Activated CD4-positive, alpha-beta memory T cell treated with anti-CD3 and anti-CD28 coated beads for 36 hours (primary cell): ENCODE measurements at regions of chr1 and their contacts with region 1.

Region 1: GRCh38 chr1:113140588-113141446 is 67.8 kb downstream of the LRIG2 start:
- DNase-seq: peak; percentile 67
- H3K4me3 Mint-ChIP-seq: no peak overlapping the region
- H3K27ac Mint-ChIP-seq: no peak overlapping the region
- H3K4me1 Mint-ChIP-seq: peaks cover 15% of the 10 kb centered on the region
- H3K27me3 Mint-ChIP-seq: no peaks in the 10 kb centered on the region

Region 2: GRCh38 chr1:112466078-112466660 is 674.6 kb before region 1 on chr1:
- CTCF ChIA-PET with region 1: no interaction called
- POLR2A ChIA-PET with region 1: no interaction called
- intact Hi-C with region 1: no loop called
- DNase-seq: peak; percentile 91
- H3K4me3 Mint-ChIP-seq: peak overlapping the region; percentile 74
- H3K27ac Mint-ChIP-seq: no peak overlapping the region
- H3K4me1 Mint-ChIP-seq: peaks cover 8% of the 10 kb centered on the region
- H3K27me3 Mint-ChIP-seq: peaks cover 15% of the 10 kb centered on the region

Region 3: GRCh38 chr1:113452921-113453770 is 312.3 kb after region 1 on chr1:
- CTCF ChIA-PET with region 1: interaction called, 25 read pairs
- POLR2A ChIA-PET with region 1: no interaction called
- intact Hi-C with region 1: loop called (anchors 2 kb)
- DNase-seq: no peak
- H3K4me3 Mint-ChIP-seq: no peak overlapping the region
- H3K27ac Mint-ChIP-seq: no peak overlapping the region
- H3K4me1 Mint-ChIP-seq: no peaks in the 10 kb centered on the region
- H3K27me3 Mint-ChIP-seq: no peaks in the 10 kb centered on the region

Region 4: GRCh38 chr1:113677250-113678158 is 536.7 kb after region 1 on chr1:
- CTCF ChIA-PET with region 1: interaction called, 6 read pairs
- POLR2A ChIA-PET with region 1: no interaction called
- intact Hi-C with region 1: loop called (anchors 1 kb)
- DNase-seq: no peak
- H3K4me3 Mint-ChIP-seq: no peak overlapping the region
- H3K27ac Mint-ChIP-seq: no peak overlapping the region
- H3K4me1 Mint-ChIP-seq: peaks cover 7% of the 10 kb centered on the region
- H3K27me3 Mint-ChIP-seq: no peaks in the 10 kb centered on the region